GM18951 (cell line): ENCODE measurements at regions of chr2 and their contacts with region 1.

Region 1: DNA sequence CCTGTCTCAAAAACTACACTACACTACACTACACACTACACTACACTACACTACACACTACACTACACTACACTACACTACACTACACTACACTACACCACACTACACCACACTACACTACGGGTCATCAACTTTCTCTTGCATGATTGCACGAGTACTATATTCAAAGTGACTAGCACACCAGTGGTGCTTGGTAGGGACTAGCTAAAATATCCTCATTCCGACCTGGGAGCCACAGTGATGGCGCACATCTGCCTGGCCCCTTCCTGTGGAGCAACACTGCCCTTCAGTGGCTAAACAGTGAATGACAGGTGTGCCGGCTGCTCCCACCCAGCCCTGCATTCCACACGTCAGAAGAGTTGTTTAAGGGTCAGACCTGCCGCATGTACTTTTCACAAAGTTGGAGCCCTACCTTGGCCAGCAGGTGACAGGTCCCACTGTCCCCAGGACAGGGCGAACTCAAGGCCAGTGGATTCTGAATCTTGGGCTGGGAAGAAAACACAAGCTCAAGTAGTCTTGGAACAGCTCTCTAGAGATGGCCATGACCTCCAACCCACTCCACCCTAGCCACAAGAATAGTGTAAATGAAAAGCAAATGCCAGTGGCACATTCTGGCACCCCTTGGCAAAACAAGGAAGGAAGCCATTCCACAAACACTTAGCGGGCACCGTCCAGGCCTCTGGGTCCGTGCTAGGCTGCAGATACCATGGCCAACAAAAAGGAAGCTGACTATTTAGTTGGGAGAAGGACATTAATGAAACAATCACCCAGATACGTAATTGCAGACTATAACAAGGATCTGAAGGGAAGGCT is 79.7 kb upstream of the MSH2 start:
- POLR2A ChIP-seq: no peak

Region 2: GRCh38 chr2:46650556-46651001 is 672.6 kb before region 1 on chr2:
- in situ Hi-C with region 1: loop called (anchors 25 kb)
- POLR2A ChIP-seq: no peak

Region 3: GRCh38 chr2:46989491-46990230 is 333.6 kb before region 1 on chr2:
- in situ Hi-C with region 1: loop called (anchors 10 kb)
- POLR2A ChIP-seq: no peak